Colonic mucosa (tissue), 4 donors: ENCODE measurements at regions of chr7 and their contacts with region 1.

Region 1: GRCh38 chr7:98935811-98936210 is 57.5 kb downstream of the TRRAP start:
- DNase-seq: no peak
- H3K4me3 ChIP-seq: no peak overlapping the region
- H3K27ac ChIP-seq: no peak overlapping the region
- H3K4me1 ChIP-seq: no peaks in the 10 kb centered on the region
- H3K27me3 ChIP-seq: no peaks in the 10 kb centered on the region
- CTCF ChIP-seq: no peak

Region 2: GRCh38 chr7:98902523-98902922 is 33.3 kb before region 1 on chr7:
- intact Hi-C with region 1: loop called (anchors 5 kb)
- DNase-seq: no peak
- H3K4me3 ChIP-seq: no peak overlapping the region
- H3K27ac ChIP-seq: no peak overlapping the region
- H3K4me1 ChIP-seq: no peaks in the 10 kb centered on the region
- H3K27me3 ChIP-seq: no peaks in the 10 kb centered on the region
- CTCF ChIP-seq: no peak

Region 3: DNA sequence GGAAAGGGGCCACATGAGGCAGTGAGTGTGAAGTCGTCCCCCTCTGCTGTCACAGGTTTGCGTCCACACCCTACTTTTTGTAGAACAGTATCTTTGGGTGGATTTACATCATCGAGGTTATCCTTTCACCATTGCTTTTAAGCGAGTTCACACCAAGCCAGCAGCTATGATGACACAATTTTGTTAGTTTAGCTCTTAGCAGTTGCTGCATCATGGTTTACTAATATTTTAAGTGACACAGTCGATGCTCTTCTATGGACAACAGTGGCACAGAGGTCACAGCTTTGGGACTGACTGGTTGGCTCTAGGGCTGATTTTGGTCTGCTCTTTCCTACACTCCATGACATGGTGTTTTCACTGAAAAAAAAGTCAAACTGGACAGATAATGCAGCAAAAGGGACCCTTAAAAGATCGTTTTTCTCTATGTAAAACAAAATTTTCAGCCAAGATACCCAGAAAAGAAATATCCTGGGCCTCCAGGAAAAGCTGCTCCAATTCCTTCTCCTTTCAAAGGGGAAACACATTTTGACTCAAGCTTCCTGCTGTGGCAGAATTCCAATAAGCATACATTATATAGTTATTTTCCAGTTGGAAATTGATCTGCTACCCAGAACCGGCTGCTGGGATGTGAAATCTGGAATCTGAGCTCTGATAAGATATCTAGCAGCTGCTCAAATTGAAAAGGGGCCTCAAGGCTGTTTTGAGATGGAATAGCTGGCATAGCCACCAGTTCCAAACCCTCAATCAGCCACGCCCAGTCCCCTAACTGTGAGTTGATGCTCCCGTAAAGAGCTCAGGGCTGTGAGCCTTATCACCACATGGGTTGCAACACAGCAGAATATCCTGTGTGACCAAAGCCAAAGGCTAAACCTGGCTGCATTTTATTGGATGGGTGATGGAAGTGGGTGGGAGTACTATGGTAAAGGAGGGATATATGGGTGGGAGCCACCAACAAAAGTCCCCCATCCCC is 93.9 kb after region 1 on chr7:
- intact Hi-C with region 1: no loop called
- DNase-seq: no peak
- H3K4me3 ChIP-seq: no peak overlapping the region
- H3K27ac ChIP-seq: no peak overlapping the region
- H3K4me1 ChIP-seq: no peaks in the 10 kb centered on the region
- H3K27me3 ChIP-seq: no peaks in the 10 kb centered on the region
- CTCF ChIP-seq: no peak